T-cell (primary cell): ENCODE measurements at regions of chr3 and their contacts with region 1.

Region 1: GRCh38 chr3:56823421-56824343 is 21.9 kb upstream of the ARHGEF3 start:
- DNase-seq: no peak
- ATAC-seq: no peak
- H3K4me3 ChIP-seq: no peak overlapping the region
- H3K4me3 Mint-ChIP-seq: peak overlapping the region in 2 of 3 donors; percentile 7 to 13
- H3K27ac ChIP-seq: no peak overlapping the region
- H3K27ac Mint-ChIP-seq: peak overlapping the region; percentile 71 to 77
- H3K4me1 ChIP-seq: peaks cover 4 to 16% of the 10 kb centered on the region in 2 experiments
- H3K4me1 Mint-ChIP-seq: peaks cover 61 to 69% (median 61%) of the 10 kb centered on the region in 3 donors
- H3K27me3 ChIP-seq: no peaks in the 10 kb centered on the region
- H3K27me3 Mint-ChIP-seq: no peaks in the 10 kb centered on the region

Region 2: GRCh38 chr3:56682462-56683121 is 141.1 kb before region 1 on chr3:
- CTCF ChIA-PET with region 1: interaction called, 5 to 7 read pairs
- POLR2A ChIA-PET with region 1: interaction called in 1 of 2 experiments, 10 read pairs
- DNase-seq: peak; percentile 63 to 87 (median 73)
- ATAC-seq: peak; percentile 76 to 80 (median 78)
- H3K4me3 ChIP-seq: peak overlapping the region; percentile 85 to 98
- H3K4me3 Mint-ChIP-seq: peak overlapping the region; percentile 94 to 95 (median 94)
- H3K27ac ChIP-seq: peak overlapping the region; percentile 99
- H3K27ac Mint-ChIP-seq: peak overlapping the region; percentile 94 to 96
- H3K4me1 ChIP-seq: peaks cover 6 to 17% of the 10 kb centered on the region in 2 experiments
- H3K4me1 Mint-ChIP-seq: peaks cover 43 to 51% (median 46%) of the 10 kb centered on the region in 3 donors
- H3K27me3 ChIP-seq: no peaks in the 10 kb centered on the region
- H3K27me3 Mint-ChIP-seq: no peaks in the 10 kb centered on the region

Region 3: DNA sequence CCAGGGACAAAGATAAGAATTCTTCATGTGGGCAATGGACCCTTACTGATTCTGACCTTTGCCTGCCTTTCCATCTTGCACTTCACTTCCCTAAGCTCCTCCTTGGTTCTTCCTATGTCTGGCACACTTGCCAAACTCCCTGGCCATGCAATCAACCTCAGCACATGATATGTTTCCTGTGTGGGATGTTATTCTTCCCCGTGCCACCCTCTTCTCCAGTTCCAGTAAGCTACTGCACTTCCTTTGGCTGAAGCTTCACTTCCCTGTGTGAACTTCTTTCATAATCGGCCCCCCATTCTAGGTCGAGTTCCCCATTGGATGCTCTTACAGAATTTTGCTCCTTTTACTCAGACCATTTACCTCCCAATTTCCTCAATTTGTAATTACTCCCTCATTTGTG is 129.9 kb before region 1 on chr3:
- CTCF ChIA-PET with region 1: interaction called in 1 of 2 experiments, 6 read pairs
- POLR2A ChIA-PET with region 1: interaction called in 1 of 2 experiments, 10 read pairs
- DNase-seq: peak in 1 of 35 experiments; percentile 18
- ATAC-seq: no peak
- H3K4me3 ChIP-seq: no peak overlapping the region
- H3K4me3 Mint-ChIP-seq: peak overlapping the region in 2 of 3 donors; percentile 6 to 53
- H3K27ac ChIP-seq: peak overlapping the region; percentile 68
- H3K27ac Mint-ChIP-seq: peak overlapping the region; percentile 16 to 79
- H3K4me1 ChIP-seq: peaks cover 37% of the 10 kb centered on the region in 2 experiments
- H3K4me1 Mint-ChIP-seq: peaks cover 46 to 47% (median 47%) of the 10 kb centered on the region in 3 donors
- H3K27me3 ChIP-seq: no peaks in the 10 kb centered on the region
- H3K27me3 Mint-ChIP-seq: no peaks in the 10 kb centered on the region

Region 4: GRCh38 chr3:57637391-57637790 is 813.7 kb after region 1 on chr3:
- CTCF ChIA-PET with region 1: no interaction called
- POLR2A ChIA-PET with region 1: no interaction called
- DNase-seq: no peak
- ATAC-seq: no peak
- H3K4me3 ChIP-seq: no peak overlapping the region
- H3K4me3 Mint-ChIP-seq: no peak overlapping the region
- H3K27ac ChIP-seq: no peak overlapping the region
- H3K27ac Mint-ChIP-seq: no peak overlapping the region
- H3K4me1 ChIP-seq: no peaks in the 10 kb centered on the region
- H3K4me1 Mint-ChIP-seq: no peaks in the 10 kb centered on the region
- H3K27me3 ChIP-seq: no peaks in the 10 kb centered on the region
- H3K27me3 Mint-ChIP-seq: no peaks in the 10 kb centered on the region